Activated B cell treated with CpG ODN at 0.5 μM for 24 hours (primary cell): ENCODE measurements at regions of chr1 and their contacts with region 1.

Region 1: DNA sequence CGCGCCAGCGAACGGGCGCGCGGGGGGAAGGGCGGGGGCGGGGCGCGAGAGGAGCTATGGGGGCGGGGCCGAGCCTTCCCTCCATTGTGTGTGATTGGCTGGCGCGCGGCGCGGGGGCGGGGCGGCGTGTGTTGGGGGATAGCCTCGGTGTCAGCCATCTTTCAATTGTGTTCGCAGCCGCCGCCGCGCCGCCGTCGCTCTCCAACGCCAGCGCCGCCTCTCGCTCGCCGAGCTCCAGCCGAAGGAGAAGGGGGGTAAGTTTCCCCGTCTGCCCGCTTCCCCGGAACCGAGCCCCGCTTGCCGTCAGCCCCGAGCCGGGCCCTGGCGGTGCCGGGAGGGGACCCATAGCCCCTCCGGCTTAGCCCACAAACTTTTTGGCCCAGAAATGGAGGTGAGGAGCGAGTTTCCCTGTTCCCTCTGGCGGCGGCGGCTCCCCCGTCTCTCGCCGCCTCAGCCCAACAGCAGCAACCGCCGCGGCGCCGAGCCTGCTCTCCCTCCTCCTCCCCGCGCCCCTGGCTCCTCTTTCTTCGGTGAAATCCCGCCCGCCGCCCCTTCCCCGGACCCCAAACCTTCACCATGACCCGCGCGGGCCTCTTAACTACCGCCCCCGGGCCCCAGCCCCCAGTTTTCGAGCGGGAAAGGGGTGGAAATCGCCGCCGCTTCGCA is at the start of gene H3-3A:
- DNase-seq: peak; percentile 96
- ATAC-seq: peak; percentile 79
- H3K4me3 Mint-ChIP-seq: peak within 1 kb of the TSS; percentile 100
- H3K27ac Mint-ChIP-seq: peak within 1 kb of the TSS; percentile 99
- H3K4me1 Mint-ChIP-seq: peaks cover 44% of the 10 kb centered on the region
- H3K27me3 Mint-ChIP-seq: no peaks in the 10 kb centered on the region
- CTCF ChIP-seq: no peak
- total RNA-seq, gene H3-3A: 600 and 642 TPM in 2 replicates

Region 2: DNA sequence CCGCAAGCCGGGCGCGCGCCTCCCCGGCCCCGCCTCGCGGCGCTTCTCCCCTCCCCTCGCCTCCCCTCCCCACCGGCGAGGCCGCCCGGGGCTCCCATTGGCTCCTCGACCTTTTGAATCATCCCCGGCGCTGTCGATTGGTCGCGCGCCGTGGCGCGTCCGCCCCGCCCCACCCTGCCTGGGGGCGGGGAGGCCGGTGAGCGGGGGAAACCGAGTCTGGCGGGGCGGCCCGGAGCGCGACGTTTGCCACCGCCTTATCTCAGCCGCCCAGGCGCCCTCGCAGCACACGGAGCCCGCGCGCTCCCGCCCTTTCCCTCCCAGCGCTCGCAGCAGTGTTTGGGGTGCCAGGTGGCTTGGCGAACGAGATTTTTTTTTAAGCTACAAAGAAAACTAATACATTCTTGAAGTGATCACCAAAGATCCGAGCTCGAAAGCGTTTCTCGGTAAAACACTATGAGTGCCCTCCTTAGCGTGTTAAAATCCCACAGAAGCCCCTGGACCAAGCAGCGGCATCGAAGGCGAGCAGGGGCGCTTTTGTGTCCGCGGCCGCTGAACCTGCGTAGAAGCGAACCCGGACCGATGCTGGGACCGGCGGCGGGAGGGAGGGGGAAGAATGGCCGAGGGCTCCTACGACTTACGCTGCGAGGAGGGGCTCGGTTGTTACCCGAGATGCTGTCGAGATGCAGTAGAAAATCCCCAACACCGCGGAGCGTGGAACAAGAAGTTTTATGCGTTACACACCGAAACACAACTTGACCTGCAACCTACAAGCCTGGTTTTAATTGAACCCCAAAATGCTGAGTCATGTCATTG is 634.4 kb before region 1 on chr1:
- CTCF ChIA-PET with region 1: no interaction called
- POLR2A ChIA-PET with region 1: interaction called, 3 read pairs
- intact Hi-C with region 1: loop called (anchors 5 kb)
- DNase-seq: peak; percentile 88
- ATAC-seq: peak; percentile 92
- H3K4me3 Mint-ChIP-seq: peak overlapping the region; percentile 89
- H3K27ac Mint-ChIP-seq: peak overlapping the region; percentile 90
- H3K4me1 Mint-ChIP-seq: peaks cover 48% of the 10 kb centered on the region
- H3K27me3 Mint-ChIP-seq: no peaks in the 10 kb centered on the region
- CTCF ChIP-seq: no peak

Region 3: GRCh38 chr1:225881969-225882693 is 180.6 kb before region 1 on chr1 and contains the start of gene TMEM63A:
- CTCF ChIA-PET with region 1: no interaction called
- POLR2A ChIA-PET with region 1: interaction called, 3 read pairs
- intact Hi-C with region 1: loop called (anchors 5 kb)
- DNase-seq: peak; percentile 85
- ATAC-seq: peak; percentile 82
- H3K4me3 Mint-ChIP-seq: peak within 1 kb of the TSS; percentile 87
- H3K27ac Mint-ChIP-seq: peak within 1 kb of the TSS; percentile 84
- H3K4me1 Mint-ChIP-seq: peaks cover 49% of the 10 kb centered on the region
- H3K27me3 Mint-ChIP-seq: no peaks in the 10 kb centered on the region
- CTCF ChIP-seq: no peak
- total RNA-seq, gene TMEM63A: 54.8 and 74.5 TPM in 2 replicates

Region 4: GRCh38 chr1:225911191-225912130 is 151.2 kb before region 1 on chr1:
- CTCF ChIA-PET with region 1: no interaction called
- POLR2A ChIA-PET with region 1: no interaction called
- intact Hi-C with region 1: no loop called
- DNase-seq: peak; percentile 66
- ATAC-seq: peak; percentile 90
- H3K4me3 Mint-ChIP-seq: no peak overlapping the region
- H3K27ac Mint-ChIP-seq: no peak overlapping the region
- H3K4me1 Mint-ChIP-seq: peaks cover 23% of the 10 kb centered on the region
- H3K27me3 Mint-ChIP-seq: no peaks in the 10 kb centered on the region
- CTCF ChIP-seq: peak; percentile 40

Region 5: GRCh38 chr1:225999227-225999911 is 63.3 kb before region 1 on chr1 and contains the start of gene SDE2:
- CTCF ChIA-PET with region 1: interaction called, 56 read pairs
- POLR2A ChIA-PET with region 1: interaction called, 617 read pairs
- intact Hi-C with region 1: loop called (anchors 1 kb)
- DNase-seq: peak; percentile 99
- ATAC-seq: peak; percentile 82
- H3K4me3 Mint-ChIP-seq: peak within 1 kb of the TSS; percentile 100
- H3K27ac Mint-ChIP-seq: peak within 1 kb of the TSS; percentile 100
- H3K4me1 Mint-ChIP-seq: peaks cover 81% of the 10 kb centered on the region
- H3K27me3 Mint-ChIP-seq: no peaks in the 10 kb centered on the region
- CTCF ChIP-seq: no peak
- total RNA-seq, gene SDE2: 21.1 and 21.8 TPM in 2 replicates

Region 6: GRCh38 chr1:226083302-226084101 is 20.8 kb after region 1 on chr1:
- CTCF ChIA-PET with region 1: interaction called, 33 read pairs
- POLR2A ChIA-PET with region 1: interaction called, 40 read pairs
- intact Hi-C with region 1: loop called (anchors 1 kb)
- DNase-seq: peak; percentile 99
- ATAC-seq: peak; percentile 91
- H3K4me3 Mint-ChIP-seq: peak overlapping the region; percentile 88
- H3K27ac Mint-ChIP-seq: peak overlapping the region; percentile 68
- H3K4me1 Mint-ChIP-seq: peaks cover 25% of the 10 kb centered on the region
- H3K27me3 Mint-ChIP-seq: no peaks in the 10 kb centered on the region
- CTCF ChIP-seq: no peak

Region 7: GRCh38 chr1:226135059-226135651 is 72.5 kb after region 1 on chr1:
- CTCF ChIA-PET with region 1: interaction called, 5 read pairs
- POLR2A ChIA-PET with region 1: interaction called, 12 read pairs
- intact Hi-C with region 1: no loop called
- DNase-seq: no peak
- ATAC-seq: no peak
- H3K4me3 Mint-ChIP-seq: no peak overlapping the region
- H3K27ac Mint-ChIP-seq: peak overlapping the region; percentile 96
- H3K4me1 Mint-ChIP-seq: peaks cover 54% of the 10 kb centered on the region
- H3K27me3 Mint-ChIP-seq: no peaks in the 10 kb centered on the region
- CTCF ChIP-seq: no peak